ENCODE measurements at regions of chr1 and their contacts with region 1.

Region 1: GRCh38 chr1:28914228-28915030 is at the start of gene EPB41:
- DNase-seq: peak; percentile 93
- ATAC-seq: peak; percentile 98
- total RNA-seq, gene EPB41: 24.9 TPM

Region 2: GRCh38 chr1:28956038-28956464 is 41.6 kb after region 1 on chr1:
- intact Hi-C with region 1: no loop called
- DNase-seq: no peak
- ATAC-seq: no peak

Region 3: GRCh38 chr1:28983509-28984310 is 69.3 kb after region 1 on chr1:
- intact Hi-C with region 1: loop called (anchors 5 kb)
- DNase-seq: peak; percentile 56
- ATAC-seq: peak; percentile 91

Measured in Right ventricle myocardium inferior (tissue), 1 donor.